ENCODE measurements at regions of chr2 and their contacts with region 1.

Region 1: DNA sequence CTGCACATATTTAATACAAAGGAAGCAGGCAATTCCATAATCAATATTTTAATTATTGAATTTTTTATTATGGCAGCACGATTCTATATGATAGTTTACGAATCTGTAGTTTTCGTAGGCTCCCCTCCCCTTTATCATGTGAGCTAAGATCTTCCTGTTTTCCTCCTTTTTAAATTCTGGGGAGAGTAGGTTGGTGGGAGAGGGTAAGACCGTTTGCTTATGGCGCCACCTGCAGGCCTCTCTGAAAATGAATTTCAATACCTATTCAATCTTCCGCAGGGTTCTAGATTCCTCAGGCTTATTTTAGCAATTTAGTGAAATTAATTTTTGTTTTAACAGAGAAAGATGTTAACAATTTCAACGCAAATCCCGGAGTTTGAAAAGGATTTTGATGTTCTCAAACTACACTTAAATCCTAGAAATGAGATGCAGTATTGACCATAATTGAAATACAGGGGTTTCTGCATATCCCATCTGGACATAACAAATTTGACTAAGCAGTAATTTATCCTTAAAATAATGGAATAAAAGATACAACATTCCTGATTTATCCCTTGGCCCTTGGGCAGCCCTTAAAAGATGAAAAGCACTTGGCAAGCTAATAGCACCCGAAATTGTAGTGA is 12.8 kb upstream of the GBX2 start:
- DNase-seq: peak; percentile 88
- H3K4me3 ChIP-seq: peak overlapping the region in 1 of 3 experiments; percentile 65
- H3K27ac ChIP-seq: peak overlapping the region; percentile 99
- H3K4me1 ChIP-seq: peaks cover 24% of the 10 kb centered on the region
- H3K27me3 ChIP-seq: no peaks in the 10 kb centered on the region
- CTCF ChIP-seq: peak; percentile 61 to 65
- POLR2A ChIP-seq: no peak

Region 2: GRCh38 chr2:235766278-235766677 is 414.7 kb before region 1 on chr2:
- CTCF ChIA-PET with region 1: interaction called, 62 read pairs
- POLR2A ChIA-PET with region 1: interaction called, 3 read pairs
- dilution Hi-C with region 1: no loop called
- intact Hi-C with region 1: loop called (anchors 1 kb)
- DNase-seq: peak; percentile 90
- H3K4me3 ChIP-seq: no peak overlapping the region
- H3K27ac ChIP-seq: no peak overlapping the region
- H3K4me1 ChIP-seq: no peaks in the 10 kb centered on the region
- H3K27me3 ChIP-seq: no peaks in the 10 kb centered on the region
- CTCF ChIP-seq: peak; percentile 67 to 73
- POLR2A ChIP-seq: no peak

Region 3: GRCh38 chr2:235859651-235860050 is 321.3 kb before region 1 on chr2:
- CTCF ChIA-PET with region 1: interaction called, 9 read pairs
- POLR2A ChIA-PET with region 1: interaction called, 4 read pairs
- dilution Hi-C with region 1: no loop called
- intact Hi-C with region 1: loop called (anchors 1 kb)
- DNase-seq: peak; percentile 82
- H3K4me3 ChIP-seq: peak overlapping the region in 1 of 3 experiments; percentile 29
- H3K27ac ChIP-seq: peak overlapping the region; percentile 98
- H3K4me1 ChIP-seq: peaks cover 42% of the 10 kb centered on the region
- H3K27me3 ChIP-seq: no peaks in the 10 kb centered on the region
- CTCF ChIP-seq: no peak
- POLR2A ChIP-seq: no peak

Region 4: GRCh38 chr2:236001166-236001828 is 179.6 kb before region 1 on chr2:
- CTCF ChIA-PET with region 1: interaction called, 5 read pairs
- POLR2A ChIA-PET with region 1: no interaction called
- dilution Hi-C with region 1: no loop called
- intact Hi-C with region 1: loop called (anchors 1 kb)
- DNase-seq: peak; percentile 85
- H3K4me3 ChIP-seq: peak overlapping the region in 1 of 3 experiments; percentile 48
- H3K27ac ChIP-seq: peak overlapping the region; percentile 90
- H3K4me1 ChIP-seq: peaks cover 11% of the 10 kb centered on the region
- H3K27me3 ChIP-seq: no peaks in the 10 kb centered on the region
- CTCF ChIP-seq: no peak
- POLR2A ChIP-seq: peak; percentile 28

Region 5: DNA sequence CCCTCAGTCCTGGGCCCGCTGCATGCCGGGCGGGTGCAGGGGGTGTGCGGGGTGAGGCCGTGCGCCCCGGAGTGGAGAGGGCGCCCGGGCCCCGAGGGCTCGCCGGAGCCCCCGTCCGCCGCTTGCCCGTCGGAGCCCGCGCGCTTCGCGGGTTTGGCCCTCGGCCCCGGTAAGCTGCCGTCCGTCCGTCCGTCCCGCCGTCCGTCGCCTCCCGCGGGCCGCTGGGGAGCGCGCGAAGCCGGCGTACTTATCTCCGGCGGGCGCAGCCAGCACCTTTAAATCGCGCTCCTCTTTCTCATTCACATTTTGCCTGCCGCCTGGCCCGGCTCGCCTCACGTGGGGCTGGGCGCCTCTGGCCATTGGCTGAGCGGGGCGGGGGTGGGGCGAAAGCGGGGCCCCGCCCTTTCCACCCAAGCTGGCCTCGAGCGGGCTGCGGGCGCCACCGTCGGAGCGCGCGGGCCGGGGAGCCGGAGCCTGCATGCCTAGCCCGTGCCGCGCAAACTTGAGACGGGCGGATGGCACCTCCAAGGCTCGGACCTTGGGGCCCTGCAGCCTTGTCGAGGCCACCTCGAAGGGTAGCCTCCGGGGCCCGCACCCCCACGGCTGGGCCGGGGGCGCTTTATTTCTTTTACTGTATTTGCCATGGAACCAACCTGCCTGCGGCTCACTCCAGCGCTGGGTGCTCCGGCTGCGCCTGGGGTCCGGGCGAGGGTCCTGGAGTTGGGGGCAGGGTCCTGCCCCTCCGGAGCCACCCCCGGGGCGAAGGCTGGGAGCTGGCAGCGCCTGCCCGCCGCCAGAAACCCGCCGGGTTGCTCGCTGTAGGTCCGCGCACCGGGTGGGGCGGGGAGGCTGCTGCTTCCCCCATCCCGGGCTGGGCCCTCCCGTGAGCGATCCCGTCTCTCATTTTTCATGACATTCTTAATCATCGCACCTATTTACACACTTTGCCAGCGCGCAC is 12.6 kb before region 1 on chr2 and contains the start of gene GBX2:
- CTCF ChIA-PET with region 1: interaction called, 61 read pairs
- POLR2A ChIA-PET with region 1: interaction called, 9 read pairs
- dilution Hi-C with region 1: no loop called
- intact Hi-C with region 1: loop called (anchors 1 kb)
- DNase-seq: peak; percentile 92
- H3K4me3 ChIP-seq: peak within 1 kb of the TSS; percentile 59 to 73 (median 68)
- H3K27ac ChIP-seq: peak within 1 kb of the TSS; percentile 11
- H3K4me1 ChIP-seq: peaks cover 25% of the 10 kb centered on the region
- H3K27me3 ChIP-seq: peaks cover 3 to 48% of the 10 kb centered on the region in 2 experiments
- CTCF ChIP-seq: no peak
- POLR2A ChIP-seq: peak; percentile 77
- total RNA-seq, gene GBX2: 3.6 TPM in 2 replicates

Region 6: GRCh38 chr2:237072067-237072931 is 891.4 kb after region 1 on chr2:
- CTCF ChIA-PET with region 1: interaction called, 4 read pairs
- POLR2A ChIA-PET with region 1: no interaction called
- dilution Hi-C with region 1: no loop called
- intact Hi-C with region 1: loop called (anchors 2 kb)
- DNase-seq: peak; percentile 72
- H3K4me3 ChIP-seq: no peak overlapping the region
- H3K27ac ChIP-seq: no peak overlapping the region
- H3K4me1 ChIP-seq: peaks cover 38% of the 10 kb centered on the region
- H3K27me3 ChIP-seq: no peaks in the 10 kb centered on the region
- CTCF ChIP-seq: peak; percentile 88
- POLR2A ChIP-seq: no peak